ENCODE measurements at regions of chr5 and their contacts with region 1.

Region 1: GRCh38 chr5:168047043-168047668 is 244.3 kb upstream of the WWC1 start:
- ATAC-seq: peak; percentile 72 to 94 (median 88)
- H3K4me3 ChIP-seq: no peak overlapping the region
- H3K27ac ChIP-seq: no peak overlapping the region
- H3K4me1 ChIP-seq: peaks cover 9 to 15% of the 10 kb centered on the region in 2 donors

Region 2: GRCh38 chr5:167071981-167072610 is 975.1 kb before region 1 on chr5:
- in situ Hi-C with region 1: no loop called
- ATAC-seq: peak in 7 of 8 experiments; percentile 48 to 94 (median 63)
- H3K4me3 ChIP-seq: no peak overlapping the region
- H3K27ac ChIP-seq: no peak overlapping the region
- H3K4me1 ChIP-seq: peaks cover 0 to 5% of the 10 kb centered on the region in 2 donors

Region 3: DNA sequence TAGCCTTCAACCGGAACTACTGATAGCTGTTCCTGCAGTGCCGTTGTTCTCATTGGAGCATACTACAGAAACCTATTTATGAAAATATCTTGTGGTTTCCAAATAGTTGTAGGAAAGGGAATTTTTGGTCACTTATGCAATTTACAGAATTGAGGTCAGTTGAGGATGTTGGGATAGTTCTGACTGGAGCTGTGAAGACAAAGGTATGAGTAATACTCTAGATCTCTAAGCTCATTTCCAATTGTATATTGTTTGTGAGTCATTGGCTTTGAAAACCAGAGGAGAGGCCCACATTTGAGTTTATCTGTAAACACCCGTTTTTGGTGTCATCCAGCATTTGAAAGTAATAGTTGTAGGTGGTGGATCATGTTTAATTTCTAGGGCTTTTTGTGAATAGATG is 317.0 kb before region 1 on chr5:
- in situ Hi-C with region 1: loop called in 1 of 9 experiments (anchors 25 kb)
- ATAC-seq: peak in 7 of 8 experiments; percentile 40 to 100 (median 63)
- H3K4me3 ChIP-seq: no peak overlapping the region
- H3K27ac ChIP-seq: no peak overlapping the region
- H3K4me1 ChIP-seq: peaks cover 5 to 12% of the 10 kb centered on the region in 2 donors